GM13976 (cell line): ENCODE measurements at regions of chr12 and their contacts with region 1.

Region 1: DNA sequence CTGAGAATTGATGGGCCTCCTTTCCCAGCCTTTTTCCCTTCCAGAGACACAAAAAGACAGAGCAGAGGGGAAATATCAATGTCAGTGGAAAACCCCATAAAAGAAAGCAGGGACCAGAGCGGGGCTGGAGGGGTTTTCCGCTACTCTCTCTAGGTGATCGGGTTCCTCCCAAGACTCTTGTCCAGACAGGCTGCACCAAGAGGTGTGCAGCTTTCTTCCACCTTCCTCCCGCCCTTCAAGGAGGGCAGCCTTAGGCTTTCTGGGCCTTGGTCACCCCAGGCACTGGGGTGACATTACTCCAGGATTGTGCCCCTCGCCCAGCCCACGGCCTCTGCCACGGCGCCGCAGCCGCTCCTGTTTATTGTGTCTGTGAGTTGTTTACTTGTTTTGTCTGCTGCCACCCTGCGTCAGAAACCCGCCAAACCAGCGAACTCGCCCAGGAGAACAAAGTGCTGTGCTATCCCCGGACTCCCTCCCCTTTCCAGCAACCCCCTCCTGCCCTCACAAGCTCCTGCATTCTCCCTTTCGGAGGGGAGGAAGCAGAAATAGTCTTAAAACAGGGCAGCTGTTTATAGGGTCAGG is 6.7 kb upstream of the HOXC6 start:
- DNase-seq: peak; percentile 68
- CTCF ChIP-seq: peak; percentile 46

Region 2: DNA sequence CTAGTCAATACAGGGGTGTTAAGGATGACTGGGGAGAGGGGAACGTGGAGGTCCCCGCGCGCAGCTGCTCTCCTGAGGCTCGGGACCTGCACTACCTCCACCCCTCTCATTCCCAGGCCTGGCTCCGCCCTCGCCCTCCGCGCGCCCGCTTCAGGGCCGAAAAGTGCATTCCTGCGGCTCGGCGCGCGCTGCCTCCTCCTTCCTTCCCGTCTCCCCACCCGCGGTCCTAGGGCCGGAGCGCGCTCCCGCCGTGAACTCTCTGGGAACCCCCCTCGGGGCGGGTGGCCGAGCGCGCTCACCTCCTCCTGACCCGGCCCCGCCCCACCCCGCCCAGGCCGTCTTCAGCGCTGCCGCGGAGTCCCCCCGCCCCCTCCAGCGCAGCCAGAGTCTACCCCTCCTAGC is 800.7 kb before region 1 on chr12:
- in situ Hi-C with region 1: no loop called
- DNase-seq: peak; percentile 96
- CTCF ChIP-seq: no peak

Region 3: GRCh38 chr12:53825246-53826081 is 196.1 kb before region 1 on chr12:
- in situ Hi-C with region 1: no loop called
- DNase-seq: no peak
- CTCF ChIP-seq: no peak

Region 4: DNA sequence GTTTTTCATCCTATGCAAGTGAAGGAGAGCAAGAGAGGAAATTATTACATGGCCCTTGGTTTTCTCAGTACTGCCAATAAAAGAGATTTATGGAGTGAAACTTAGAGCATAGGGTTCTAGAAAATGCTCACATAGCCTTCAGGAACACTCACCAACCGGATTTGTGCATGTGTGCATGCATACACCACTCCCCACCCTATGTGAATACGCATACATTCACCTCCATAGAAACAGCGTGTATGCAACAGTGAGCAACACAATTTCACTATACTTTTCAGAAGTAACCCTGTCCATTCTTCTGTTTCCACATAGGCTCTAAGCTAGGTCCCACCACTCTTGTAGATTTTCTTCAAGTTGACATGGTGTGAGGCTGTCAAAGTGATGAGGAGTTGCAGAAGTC is 114.4 kb before region 1 on chr12:
- in situ Hi-C with region 1: no loop called
- DNase-seq: no peak
- CTCF ChIP-seq: no peak

Region 5: DNA sequence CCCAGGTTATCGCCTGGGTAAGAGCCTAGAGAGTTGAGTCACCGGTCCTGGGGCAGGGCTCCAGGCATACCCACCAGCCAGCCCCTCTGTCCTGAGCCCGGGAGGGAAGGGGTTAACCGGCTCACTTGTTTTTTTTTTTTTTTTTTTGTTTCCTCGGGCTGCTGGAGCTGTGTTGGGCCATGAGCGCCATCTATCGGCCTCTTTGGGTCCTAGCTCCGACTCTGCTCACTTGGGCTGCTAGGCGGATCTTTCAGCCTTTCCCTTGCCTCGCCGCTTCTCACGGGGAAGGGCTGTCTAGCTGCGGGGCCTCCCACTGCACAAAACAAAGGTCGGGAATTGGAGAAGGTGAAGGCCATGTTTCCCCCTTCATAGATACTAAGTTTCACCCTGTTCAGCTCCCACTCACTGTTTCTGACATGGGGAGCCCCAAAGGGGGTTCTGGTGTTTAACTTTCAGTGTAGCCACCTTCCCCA is 170.1 kb after region 1 on chr12:
- in situ Hi-C with region 1: loop called (anchors 10 kb)
- DNase-seq: peak; percentile 82
- CTCF ChIP-seq: peak; percentile 80